Adrenal gland (tissue), 19 donors: ENCODE measurements at regions of chr3 and their contacts with region 1.

Region 1: GRCh38 chr3:148955544-148956346 is 35.6 kb upstream of the GYG1 start:
- DNase-seq: peak; percentile 25 to 75 (median 63)
- H3K4me3 ChIP-seq: no peak overlapping the region
- H3K27ac ChIP-seq: peak overlapping the region in 2 of 5 donors; percentile 68 to 71
- H3K4me1 ChIP-seq: peaks cover 9 to 10% of the 10 kb centered on the region in 2 donors
- H3K27me3 ChIP-seq: no peaks in the 10 kb centered on the region
- CTCF ChIP-seq: peak; percentile 27 to 76 (median 63)
- POLR2A ChIP-seq: no peak

Region 2: DNA sequence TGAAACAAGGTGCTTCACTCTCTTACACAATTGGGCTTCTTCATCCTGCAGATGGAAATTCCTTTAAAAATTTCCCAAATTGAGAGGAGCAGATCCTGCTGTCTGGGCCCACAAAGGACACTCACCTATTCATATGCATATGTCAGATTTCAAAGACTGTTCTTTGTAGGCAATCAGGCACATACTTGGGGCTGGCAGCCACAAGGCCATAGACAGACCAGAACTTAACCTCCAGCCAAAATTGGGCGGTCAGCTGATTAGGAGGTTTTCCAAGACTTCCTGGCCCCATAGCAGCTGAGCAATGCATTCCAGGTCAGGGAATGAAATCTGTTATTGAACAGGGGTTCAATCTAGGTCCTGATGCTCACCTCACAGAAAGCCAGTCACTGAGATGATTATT is 158.7 kb after region 1 on chr3:
- intact Hi-C with region 1: loop called (anchors 10 kb)
- DNase-seq: peak in 2 of 7 donors; percentile 28 to 38
- H3K4me3 ChIP-seq: no peak overlapping the region
- H3K27ac ChIP-seq: no peak overlapping the region
- H3K4me1 ChIP-seq: no peaks in the 10 kb centered on the region
- H3K27me3 ChIP-seq: no peaks in the 10 kb centered on the region
- CTCF ChIP-seq: no peak
- POLR2A ChIP-seq: no peak